OCI-LY7 (cell line): ENCODE measurements at regions of chr17 and their contacts with region 1.

Region 1: DNA sequence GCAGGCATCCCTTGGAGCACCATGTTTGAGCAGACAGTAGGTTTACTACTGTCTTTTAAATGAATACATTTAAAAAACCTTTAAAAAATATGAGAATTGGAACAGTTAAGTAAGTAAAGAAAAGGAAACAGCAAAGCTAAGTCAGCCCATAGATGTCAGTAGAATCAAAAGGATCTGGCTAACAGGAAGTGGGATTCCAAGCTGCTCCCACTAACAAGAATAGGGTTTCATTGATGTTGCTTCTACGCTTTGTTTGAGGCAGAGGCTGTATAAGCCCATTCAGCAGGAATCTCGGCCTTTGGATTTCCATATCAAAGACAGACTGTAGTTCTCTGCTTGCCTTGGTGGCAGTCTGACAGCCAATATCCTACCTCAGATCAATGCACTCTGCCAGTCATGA is 122.9 kb upstream of the ELAC2 start:
- DNase-seq: no peak
- H3K4me3 ChIP-seq: no peak overlapping the region
- H3K27ac ChIP-seq: no peak overlapping the region
- H3K4me1 ChIP-seq: no peaks in the 10 kb centered on the region
- CTCF ChIP-seq: no peak

Region 2: DNA sequence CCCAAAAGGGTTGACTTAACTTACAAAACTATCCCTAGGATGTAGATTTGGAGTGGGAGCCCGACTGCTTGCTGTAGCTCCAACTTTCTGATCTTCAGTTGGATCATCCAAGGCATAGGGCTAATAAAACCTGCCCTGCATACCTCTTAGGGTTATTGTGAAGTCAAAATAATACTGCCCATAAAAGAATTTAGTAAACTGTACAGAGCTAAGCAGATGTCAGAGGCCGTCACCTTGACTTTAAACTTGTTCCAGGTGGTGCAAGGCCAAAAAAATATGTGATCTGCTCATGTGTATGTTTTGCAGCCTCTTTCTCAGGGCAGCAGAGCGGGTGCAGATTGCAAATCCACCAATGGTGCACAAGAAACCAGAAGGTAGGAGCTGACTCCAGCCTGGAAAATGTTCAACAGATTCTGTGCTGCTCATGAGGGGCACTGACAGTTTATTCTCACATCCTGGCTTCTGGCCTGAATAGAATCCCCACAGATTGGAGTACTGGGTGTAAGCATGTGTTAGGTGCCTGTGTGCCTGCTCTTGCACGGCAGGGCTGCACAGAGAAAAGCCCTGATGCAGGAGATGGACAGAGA is 939.4 kb before region 1 on chr17:
- CTCF ChIA-PET with region 1: no interaction called
- POLR2A ChIA-PET with region 1: interaction called, 11 read pairs
- intact Hi-C with region 1: no loop called
- DNase-seq: no peak
- H3K4me3 ChIP-seq: no peak overlapping the region
- H3K27ac ChIP-seq: no peak overlapping the region
- H3K4me1 ChIP-seq: no peaks in the 10 kb centered on the region
- CTCF ChIP-seq: no peak

Region 3: DNA sequence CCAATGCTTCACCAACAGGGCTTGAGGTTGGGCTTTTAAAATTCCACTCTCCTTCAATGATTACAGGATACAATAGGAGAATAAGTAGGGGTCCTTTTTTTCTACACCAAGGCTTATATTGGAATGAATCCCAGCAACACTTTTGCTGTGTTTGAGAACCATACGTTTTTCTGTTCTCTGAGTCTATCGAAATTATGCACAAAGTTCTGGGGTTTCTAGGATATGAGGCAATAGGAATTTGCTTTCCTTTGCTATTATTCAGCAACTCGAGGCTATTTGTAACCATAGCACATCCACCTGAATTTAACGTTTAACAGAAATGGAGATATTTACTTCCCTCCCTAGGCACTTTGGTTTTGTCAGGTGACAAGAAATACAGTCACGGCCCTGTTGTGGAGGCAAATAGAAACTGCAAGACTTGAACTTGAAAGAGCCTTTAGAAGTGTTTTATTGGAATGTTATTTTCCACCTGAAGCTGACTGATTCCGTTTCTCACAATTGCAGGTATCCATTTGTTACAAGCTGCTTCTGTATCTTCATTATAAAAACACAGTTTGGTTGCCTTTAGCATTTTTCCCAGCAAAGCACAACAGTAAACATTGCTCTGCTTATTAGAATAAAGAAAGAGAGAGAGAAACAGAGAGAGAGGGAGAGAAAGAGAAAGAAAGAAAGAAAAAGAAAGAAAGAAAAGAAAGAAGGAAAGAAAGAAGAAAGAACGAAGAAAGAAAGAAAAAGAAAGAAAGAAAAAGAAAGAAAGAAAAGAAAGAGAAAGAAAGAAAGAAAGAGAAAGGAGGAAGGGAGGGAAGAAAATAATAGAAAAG is 351.4 kb after region 1 on chr17:
- CTCF ChIA-PET with region 1: no interaction called
- POLR2A ChIA-PET with region 1: no interaction called
- intact Hi-C with region 1: no loop called
- DNase-seq: no peak
- H3K4me3 ChIP-seq: no peak overlapping the region
- H3K27ac ChIP-seq: no peak overlapping the region
- H3K4me1 ChIP-seq: no peaks in the 10 kb centered on the region
- CTCF ChIP-seq: no peak